MCF 10A (cell line): ENCODE measurements at regions of chr22 and their contacts with region 1.

Region 1: DNA sequence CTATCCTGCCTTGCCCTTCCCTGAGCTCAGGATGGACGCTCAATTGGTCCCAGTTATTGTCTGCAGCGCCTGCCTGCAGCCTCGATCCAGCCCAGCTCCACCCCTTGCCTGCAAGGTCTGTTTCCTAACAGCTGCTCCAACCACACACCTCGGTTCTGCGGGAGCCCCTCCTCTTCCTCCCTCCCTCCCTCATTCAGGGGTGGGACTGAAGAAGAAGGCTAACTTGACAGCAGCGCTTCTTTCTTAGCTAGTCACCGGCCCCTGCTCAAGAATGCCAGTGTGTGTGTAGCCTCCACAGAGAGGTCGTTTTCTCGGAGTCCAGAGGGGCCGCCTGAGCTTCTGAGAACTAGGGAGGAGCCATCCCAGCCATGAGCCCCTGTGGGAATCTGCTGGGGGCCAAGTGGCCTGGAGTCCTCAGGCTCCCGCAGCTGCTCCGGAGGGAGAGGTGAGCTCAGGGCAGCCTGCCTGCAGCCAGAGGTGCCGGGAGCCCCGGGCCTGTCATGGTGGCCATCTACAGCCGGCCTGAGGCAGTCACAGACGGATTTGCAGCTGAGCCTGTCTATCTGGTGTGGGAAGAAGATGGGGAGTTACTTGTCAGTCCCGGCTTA is 36.1 kb downstream of the LIMK2 start:
- DNase-seq: peak; percentile 95
- H3K4me3 Mint-ChIP-seq: peak overlapping the region; percentile 85
- H3K27ac Mint-ChIP-seq: peak overlapping the region; percentile 97
- H3K4me1 Mint-ChIP-seq: peaks cover 19% of the 10 kb centered on the region
- H3K27me3 Mint-ChIP-seq: no peaks in the 10 kb centered on the region
- CTCF ChIP-seq: no peak

Region 2: DNA sequence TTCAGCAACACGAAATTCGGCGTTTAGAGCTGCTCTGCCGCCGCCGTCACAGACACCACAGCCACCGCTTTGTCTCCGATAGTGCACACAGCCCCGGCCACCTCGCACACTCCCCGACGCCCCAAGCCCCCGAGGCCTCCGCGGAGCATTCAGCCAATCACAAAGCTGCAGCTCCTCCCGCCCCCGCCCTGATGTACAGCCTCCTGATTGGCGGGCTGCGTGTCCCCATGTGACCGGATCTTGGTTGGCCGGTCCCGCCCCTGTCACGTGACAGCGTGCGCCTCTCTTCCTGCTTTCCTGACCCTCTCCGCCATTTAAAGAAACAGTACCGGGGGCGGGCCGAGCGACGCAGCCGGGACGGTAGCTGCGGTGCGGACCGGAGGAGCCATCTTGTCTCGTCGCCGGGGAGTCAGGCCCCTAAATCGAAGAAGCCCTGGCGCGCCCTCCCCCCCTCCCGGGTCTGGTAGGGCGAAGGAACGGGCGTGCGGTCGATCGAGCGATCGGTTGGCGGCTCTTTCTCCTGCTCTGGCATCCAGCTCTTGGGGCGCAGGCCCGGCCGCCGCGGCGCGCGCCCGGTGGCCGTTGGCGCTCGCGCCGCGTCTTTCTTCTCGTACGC is 279.2 kb before region 1 on chr22 and contains the start of gene TUG1:
- CTCF ChIA-PET with region 1: no interaction called
- POLR2A ChIA-PET with region 1: interaction called, 12 read pairs
- intact Hi-C with region 1: no loop called
- DNase-seq: peak; percentile 98
- H3K4me3 Mint-ChIP-seq: peak within 1 kb of the TSS; percentile 88
- H3K27ac Mint-ChIP-seq: peak within 1 kb of the TSS; percentile 88
- H3K4me1 Mint-ChIP-seq: peaks cover 28% of the 10 kb centered on the region
- H3K27me3 Mint-ChIP-seq: no peaks in the 10 kb centered on the region
- CTCF ChIP-seq: no peak
- total RNA-seq, gene TUG1: 85.5 and 99.0 TPM in 2 replicates

Region 3: DNA sequence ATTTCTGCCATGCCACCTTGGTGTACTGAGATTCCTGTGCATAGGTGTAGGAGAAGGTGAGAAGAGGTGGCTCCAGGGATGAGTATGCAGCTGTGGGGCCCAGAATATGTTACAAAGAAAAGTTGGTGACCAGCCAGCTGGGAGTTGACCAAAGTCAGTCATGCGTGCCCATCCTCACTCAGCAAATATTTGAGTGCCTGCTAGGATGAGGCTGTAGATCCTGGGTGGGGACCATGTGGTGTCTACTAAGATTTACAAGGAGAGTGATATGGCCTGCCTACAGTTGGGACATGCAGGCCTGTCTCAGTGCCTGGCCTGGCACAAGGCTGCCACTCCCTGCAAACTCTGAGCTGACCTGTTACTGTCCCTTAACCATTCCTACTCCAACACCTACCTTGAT is 68.9 kb before region 1 on chr22:
- CTCF ChIA-PET with region 1: no interaction called
- POLR2A ChIA-PET with region 1: interaction called, 105 read pairs
- intact Hi-C with region 1: no loop called
- DNase-seq: peak; percentile 81
- H3K4me3 Mint-ChIP-seq: no peak overlapping the region
- H3K27ac Mint-ChIP-seq: peak overlapping the region; percentile 82
- H3K4me1 Mint-ChIP-seq: peaks cover 34% of the 10 kb centered on the region
- H3K27me3 Mint-ChIP-seq: no peaks in the 10 kb centered on the region
- CTCF ChIP-seq: no peak

Region 4: GRCh38 chr22:31211862-31212730 is 36.1 kb before region 1 on chr22 and contains the start of gene LIMK2:
- CTCF ChIA-PET with region 1: interaction called, 20 read pairs
- POLR2A ChIA-PET with region 1: interaction called, 30 read pairs
- intact Hi-C with region 1: no loop called
- DNase-seq: peak; percentile 89
- H3K4me3 Mint-ChIP-seq: peak within 1 kb of the TSS; percentile 87
- H3K27ac Mint-ChIP-seq: peak within 1 kb of the TSS; percentile 82
- H3K4me1 Mint-ChIP-seq: peaks cover 20% of the 10 kb centered on the region
- H3K27me3 Mint-ChIP-seq: no peaks in the 10 kb centered on the region
- CTCF ChIP-seq: peak; percentile 85
- total RNA-seq, gene LIMK2: 74.4 and 126 TPM in 2 replicates

Region 5: DNA sequence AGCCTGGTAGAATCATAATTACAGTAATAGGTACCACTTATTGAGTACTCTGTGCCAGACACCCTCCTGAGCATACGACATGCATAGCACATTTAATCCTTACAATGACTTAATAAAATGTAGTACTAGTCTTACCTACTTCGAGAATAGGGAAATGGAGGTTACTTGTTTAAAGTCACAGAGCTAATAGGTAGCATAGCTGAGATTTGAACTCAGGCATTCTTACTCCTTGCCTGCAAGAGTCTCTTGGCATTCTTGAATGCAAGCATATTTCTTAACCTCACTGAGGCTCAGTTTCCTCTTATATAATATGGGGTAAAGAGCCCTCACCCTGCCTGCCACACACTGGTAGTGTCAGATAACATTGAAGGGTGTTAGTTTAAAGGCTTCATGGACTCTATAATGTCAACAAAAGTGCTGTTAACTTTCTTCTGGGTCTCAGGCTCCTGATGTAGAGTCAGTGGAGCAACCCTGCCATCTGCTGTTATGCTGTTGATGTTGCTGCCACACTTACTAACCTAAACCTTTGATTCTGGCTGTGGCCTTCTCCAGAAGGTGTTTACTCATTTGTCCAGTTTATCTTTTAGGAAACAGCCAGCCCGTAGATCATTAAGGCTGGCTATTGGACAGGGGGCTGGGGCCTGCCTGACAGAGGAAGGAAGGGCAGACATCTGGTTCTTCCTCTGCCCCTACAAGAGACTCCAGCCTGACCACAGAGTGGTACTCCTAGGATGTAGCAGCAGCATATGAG is 17.2 kb before region 1 on chr22:
- CTCF ChIA-PET with region 1: interaction called, 39 read pairs
- POLR2A ChIA-PET with region 1: interaction called, 32 read pairs
- intact Hi-C with region 1: no loop called
- DNase-seq: peak; percentile 47
- H3K4me3 Mint-ChIP-seq: no peak overlapping the region
- H3K27ac Mint-ChIP-seq: peak overlapping the region; percentile 46
- H3K4me1 Mint-ChIP-seq: peaks cover 12% of the 10 kb centered on the region
- H3K27me3 Mint-ChIP-seq: no peaks in the 10 kb centered on the region
- CTCF ChIP-seq: peak; percentile 57

Region 6: DNA sequence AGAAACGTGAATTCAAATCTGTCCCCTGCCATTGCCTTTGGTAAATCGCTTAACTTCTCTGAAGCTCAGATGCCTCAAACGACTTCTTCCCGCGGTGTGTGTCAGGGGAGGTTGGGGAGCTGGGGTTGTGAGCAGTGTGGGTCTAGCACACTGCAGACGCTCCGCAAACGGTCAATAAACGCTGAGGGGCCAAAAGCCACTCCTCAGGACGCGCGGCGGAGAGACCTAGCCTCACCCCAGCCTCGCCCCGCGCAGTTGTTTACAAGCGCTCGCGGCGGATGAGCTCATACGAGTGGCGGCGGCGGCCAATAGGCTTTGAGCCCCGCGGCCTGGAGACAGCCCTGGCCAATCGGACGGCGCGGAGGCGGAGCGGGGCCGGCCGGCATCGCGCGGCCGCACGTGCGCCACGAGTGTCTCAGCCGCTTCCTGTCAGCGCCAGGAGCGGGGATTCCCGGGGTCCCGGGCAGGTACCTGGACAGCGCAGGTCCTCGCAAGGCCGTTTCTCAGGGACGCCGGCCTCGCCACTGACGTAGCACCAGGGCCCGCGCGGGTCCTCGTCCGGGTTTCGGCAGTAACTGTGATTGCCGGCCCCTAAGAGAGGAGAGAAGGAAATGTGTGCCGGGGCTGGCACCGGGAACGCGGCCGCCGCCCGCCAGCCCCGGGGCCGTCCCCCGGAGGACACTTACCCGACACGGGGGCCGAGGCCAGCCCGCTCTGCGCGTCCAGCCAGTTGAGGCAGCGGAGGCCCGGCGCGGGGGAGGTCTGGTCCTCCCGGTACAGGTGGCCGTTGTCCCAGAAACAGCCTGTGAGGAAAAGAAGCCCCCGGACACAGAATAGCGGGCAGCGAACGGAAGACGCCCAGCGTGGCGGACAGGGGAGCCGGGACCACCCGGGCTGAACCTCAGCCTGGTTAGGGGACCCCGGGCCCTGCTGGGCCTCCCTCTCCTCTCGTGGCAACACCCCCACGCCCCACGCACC is 42.5 kb after region 1 on chr22:
- CTCF ChIA-PET with region 1: interaction called, 4 read pairs
- POLR2A ChIA-PET with region 1: interaction called, 62 read pairs
- intact Hi-C with region 1: no loop called
- DNase-seq: peak; percentile 93
- H3K4me3 Mint-ChIP-seq: peak overlapping the region; percentile 82
- H3K27ac Mint-ChIP-seq: peak overlapping the region; percentile 70
- H3K4me1 Mint-ChIP-seq: peaks cover 13% of the 10 kb centered on the region
- H3K27me3 Mint-ChIP-seq: no peaks in the 10 kb centered on the region
- CTCF ChIP-seq: no peak

Region 7: GRCh38 chr22:31313366-31314147 is 65.3 kb after region 1 on chr22:
- CTCF ChIA-PET with region 1: interaction called, 13 read pairs
- POLR2A ChIA-PET with region 1: interaction called, 41 read pairs
- intact Hi-C with region 1: no loop called
- DNase-seq: peak; percentile 95
- H3K4me3 Mint-ChIP-seq: no peak overlapping the region
- H3K27ac Mint-ChIP-seq: peak overlapping the region; percentile 52
- H3K4me1 Mint-ChIP-seq: peaks cover 6% of the 10 kb centered on the region
- H3K27me3 Mint-ChIP-seq: no peaks in the 10 kb centered on the region
- CTCF ChIP-seq: peak; percentile 71